Left ventricle myocardium superior (tissue), 1 donor: ENCODE measurements at regions of chr9 and their contacts with region 1.

Region 1: DNA sequence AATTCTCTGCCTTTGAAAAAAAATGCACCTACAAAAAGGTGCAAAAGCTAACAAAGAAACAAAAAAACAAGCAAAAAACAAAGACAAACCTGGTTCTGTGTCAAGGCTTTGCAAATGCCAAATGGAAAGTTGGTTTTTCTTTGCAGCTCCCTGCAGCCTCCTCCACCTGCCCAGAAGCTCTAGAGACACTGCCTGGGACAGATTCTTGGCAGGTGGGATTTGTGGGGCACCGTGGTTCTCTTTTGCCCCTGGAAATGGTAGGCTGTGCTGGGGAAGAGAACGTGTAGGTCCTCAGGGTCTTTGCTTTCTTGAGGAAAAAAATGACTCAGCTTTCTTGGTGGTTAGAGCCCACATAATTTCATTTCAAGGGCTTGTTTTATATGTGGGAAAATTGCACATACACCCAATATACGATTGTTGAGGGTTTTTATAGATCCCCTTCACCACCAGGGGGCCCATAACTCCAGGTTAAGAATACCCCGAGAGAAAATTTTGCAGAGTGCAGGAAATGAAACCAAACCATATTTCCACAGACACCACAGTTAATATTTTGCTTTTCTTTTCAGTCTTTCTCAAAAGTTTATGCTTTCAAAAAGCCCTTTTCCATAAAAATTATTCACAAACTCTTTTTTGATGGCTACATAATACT is 58.7 kb downstream of the NXNL2 start:
- DNase-seq: no peak
- ATAC-seq: peak; percentile 77

Region 2: DNA sequence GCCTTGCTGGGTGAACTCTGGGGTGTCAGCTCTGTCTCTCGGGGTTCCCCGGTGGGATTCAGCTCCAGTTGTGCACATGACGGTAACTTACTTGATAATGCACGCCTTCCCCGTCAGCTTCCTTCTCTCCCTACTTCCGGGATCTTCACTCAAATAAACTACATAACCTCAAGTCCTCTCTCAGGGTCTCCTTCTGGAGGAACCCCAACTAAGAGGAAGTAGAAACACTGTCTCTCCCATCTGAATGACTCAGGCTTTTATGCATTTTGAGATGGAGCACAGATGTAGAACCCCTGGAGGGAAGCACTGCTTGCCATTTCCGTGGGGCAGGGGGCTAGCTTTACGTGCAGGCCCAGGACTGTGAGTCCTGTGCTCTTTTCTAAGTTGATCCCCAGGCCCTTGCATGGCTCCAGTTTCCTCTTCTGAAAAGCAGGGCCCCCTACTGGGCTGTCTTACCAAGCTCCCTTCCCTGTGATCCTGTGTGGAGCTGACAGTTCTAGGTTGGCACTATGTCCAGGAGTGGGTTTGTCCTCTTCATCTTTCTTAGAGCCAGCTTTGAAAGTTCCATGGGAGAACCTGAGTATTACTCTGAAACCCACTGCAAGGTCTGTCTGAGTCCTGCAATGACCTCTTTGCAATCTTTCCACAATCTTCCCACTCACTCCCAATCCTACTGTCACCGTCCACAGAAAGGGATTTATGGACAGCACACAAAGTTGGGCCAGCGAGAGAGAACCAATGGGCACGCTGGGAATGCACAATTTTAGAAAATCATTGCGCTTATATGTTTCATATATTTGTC is 415.3 kb after region 1 on chr9:
- intact Hi-C with region 1: loop called (anchors 5 kb)
- DNase-seq: no peak
- ATAC-seq: no peak